B cell (primary cell): ENCODE measurements at regions of chr17 and their contacts with region 1.

Region 1: DNA sequence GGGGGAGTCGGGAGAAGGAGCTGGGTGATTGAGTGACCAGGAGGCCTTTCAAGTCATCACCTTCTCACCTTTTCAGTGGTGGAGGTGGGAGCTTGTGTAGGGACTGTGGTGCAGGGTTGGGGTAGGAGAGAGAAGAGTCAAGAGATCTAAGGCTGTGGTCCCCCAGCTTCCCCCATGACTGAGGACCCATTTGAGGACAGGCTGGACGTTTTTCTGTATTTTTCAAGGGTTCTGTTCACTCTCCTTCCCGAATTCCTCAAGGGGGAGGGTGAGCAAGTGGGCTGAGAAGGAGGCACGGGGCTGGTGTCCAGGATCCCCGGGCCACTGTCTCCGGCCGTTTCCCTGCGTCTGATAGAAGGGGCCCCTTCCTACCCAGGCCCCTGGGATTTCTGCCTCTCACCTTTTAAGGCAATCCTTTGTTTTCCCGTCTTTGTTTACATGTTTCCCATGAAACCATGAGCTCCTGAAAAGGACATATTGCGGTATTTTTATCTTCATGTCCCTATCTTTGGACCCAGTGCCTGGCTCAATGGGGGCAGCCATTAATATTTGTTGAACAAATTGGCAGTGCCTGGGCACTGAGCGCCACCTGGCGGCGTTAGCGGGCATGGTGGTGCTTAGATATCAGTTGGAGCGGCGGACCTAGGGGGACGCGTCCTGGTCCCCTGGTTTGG is 9.2 kb upstream of the CD300A start:
- DNase-seq: peak; percentile 82
- ATAC-seq: peak; percentile 53
- H3K4me3 ChIP-seq: no peak overlapping the region
- H3K4me3 Mint-ChIP-seq: peak overlapping the region; percentile 11
- H3K27ac ChIP-seq: no peak overlapping the region
- H3K27ac Mint-ChIP-seq: no peak overlapping the region
- H3K4me1 ChIP-seq: peaks cover 11 to 19% of the 10 kb centered on the region in 2 donors
- H3K4me1 Mint-ChIP-seq: peaks cover 7% of the 10 kb centered on the region
- H3K27me3 ChIP-seq: peaks cover 0 to 31% (median 9%) of the 10 kb centered on the region in 4 experiments
- H3K27me3 Mint-ChIP-seq: peaks cover 31% of the 10 kb centered on the region
- CTCF ChIP-seq: peak; percentile 97

Region 2: GRCh38 chr17:73255671-73256181 is 1201.6 kb before region 1 on chr17:
- CTCF ChIA-PET with region 1: no interaction called
- POLR2A ChIA-PET with region 1: no interaction called
- intact Hi-C with region 1: no loop called
- DNase-seq: peak; percentile 70
- ATAC-seq: peak; percentile 65
- H3K4me3 ChIP-seq: no peak overlapping the region
- H3K4me3 Mint-ChIP-seq: no peak overlapping the region
- H3K27ac ChIP-seq: no peak overlapping the region
- H3K27ac Mint-ChIP-seq: no peak overlapping the region
- H3K4me1 ChIP-seq: no peaks in the 10 kb centered on the region
- H3K4me1 Mint-ChIP-seq: peaks cover 1% of the 10 kb centered on the region
- H3K27me3 ChIP-seq: peaks cover 0 to 3% (median 0%) of the 10 kb centered on the region in 4 experiments
- H3K27me3 Mint-ChIP-seq: no peaks in the 10 kb centered on the region
- CTCF ChIP-seq: peak; percentile 99

Region 3: DNA sequence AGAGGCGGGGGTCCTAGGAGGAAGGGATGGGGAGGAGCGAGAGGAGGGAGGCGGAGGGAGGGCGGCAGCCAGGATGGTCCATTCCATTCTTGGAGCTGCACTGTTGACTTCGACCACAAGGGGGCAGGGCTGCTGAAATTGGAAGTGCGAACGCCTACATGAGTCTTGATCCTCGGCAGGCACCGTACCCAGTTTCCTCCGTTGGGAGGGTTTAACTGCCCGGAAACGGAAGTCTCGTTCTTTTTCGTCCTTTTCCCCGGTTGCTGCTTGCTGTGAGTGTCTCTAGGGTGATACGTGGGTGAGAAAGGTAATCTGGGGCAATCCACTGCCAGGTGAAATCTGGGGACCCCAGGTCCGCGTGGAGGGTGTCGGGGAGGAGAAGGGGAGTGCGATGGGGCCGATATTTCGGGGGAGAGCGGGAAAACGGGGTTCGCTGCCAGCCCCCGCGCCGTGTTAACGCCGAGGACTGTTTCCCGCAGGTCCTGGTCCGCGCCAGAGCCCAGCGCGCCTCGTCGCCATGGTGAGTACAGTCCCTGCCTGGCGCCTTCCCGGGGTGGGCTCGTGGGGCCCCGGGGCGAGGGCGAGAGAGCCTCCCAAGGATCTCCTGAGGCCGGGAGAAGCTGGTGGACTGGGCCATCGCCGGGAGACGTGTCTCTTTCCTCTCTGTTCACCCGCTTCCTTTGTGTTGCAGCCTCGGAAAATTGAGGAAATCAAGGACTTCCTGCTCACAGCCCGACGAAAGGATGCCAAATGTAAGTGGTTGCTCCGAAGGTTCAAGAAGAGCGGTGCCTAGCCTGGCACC is 253.6 kb before region 1 on chr17 and contains the start of gene RPL38:
- CTCF ChIA-PET with region 1: interaction called, 5 read pairs
- POLR2A ChIA-PET with region 1: no interaction called
- intact Hi-C with region 1: loop called (anchors 2 kb)
- DNase-seq: peak; percentile 96
- ATAC-seq: peak; percentile 98
- H3K4me3 ChIP-seq: peak within 1 kb of the TSS; percentile 90 to 94 (median 91)
- H3K4me3 Mint-ChIP-seq: peak within 1 kb of the TSS; percentile 98
- H3K27ac ChIP-seq: peak within 1 kb of the TSS; percentile 70 to 85
- H3K27ac Mint-ChIP-seq: peak within 1 kb of the TSS; percentile 94
- H3K4me1 ChIP-seq: peaks cover 34 to 40% of the 10 kb centered on the region in 2 donors
- H3K4me1 Mint-ChIP-seq: peaks cover 33% of the 10 kb centered on the region
- H3K27me3 ChIP-seq: peaks cover 0 to 40% (median 8%) of the 10 kb centered on the region in 4 experiments
- H3K27me3 Mint-ChIP-seq: peaks cover 29% of the 10 kb centered on the region
- CTCF ChIP-seq: peak; percentile 84
- total RNA-seq, gene RPL38: 1,416 and 1,550 TPM in 2 replicates

Region 4: GRCh38 chr17:74361230-74362068 is 95.8 kb before region 1 on chr17 and contains the start of gene BTBD17:
- CTCF ChIA-PET with region 1: interaction called, 65 read pairs
- POLR2A ChIA-PET with region 1: no interaction called
- intact Hi-C with region 1: no loop called
- DNase-seq: peak; percentile 30
- ATAC-seq: peak; percentile 45
- H3K4me3 ChIP-seq: no peak within 1 kb of the TSS
- H3K4me3 Mint-ChIP-seq: no peak within 1 kb of the TSS
- H3K27ac ChIP-seq: no peak within 1 kb of the TSS
- H3K27ac Mint-ChIP-seq: no peak within 1 kb of the TSS
- H3K4me1 ChIP-seq: peaks cover 0 to 7% of the 10 kb centered on the region in 2 donors
- H3K4me1 Mint-ChIP-seq: peaks cover 2% of the 10 kb centered on the region
- H3K27me3 ChIP-seq: peaks cover 0 to 36% (median 7%) of the 10 kb centered on the region in 4 experiments
- H3K27me3 Mint-ChIP-seq: peaks cover 36% of the 10 kb centered on the region
- CTCF ChIP-seq: peak; percentile 41
- total RNA-seq, gene BTBD17: not detected in 2 replicates

Region 5: GRCh38 chr17:74379495-74380085 is 77.7 kb before region 1 on chr17:
- CTCF ChIA-PET with region 1: interaction called, 95 read pairs
- POLR2A ChIA-PET with region 1: interaction called, 5 read pairs
- intact Hi-C with region 1: loop called (anchors 1 kb)
- DNase-seq: peak; percentile 83
- ATAC-seq: peak; percentile 73
- H3K4me3 ChIP-seq: no peak overlapping the region
- H3K4me3 Mint-ChIP-seq: no peak overlapping the region
- H3K27ac ChIP-seq: no peak overlapping the region
- H3K27ac Mint-ChIP-seq: no peak overlapping the region
- H3K4me1 ChIP-seq: peaks cover 5 to 9% of the 10 kb centered on the region in 2 donors
- H3K4me1 Mint-ChIP-seq: no peaks in the 10 kb centered on the region
- H3K27me3 ChIP-seq: peaks cover 0 to 15% (median 3%) of the 10 kb centered on the region in 4 experiments
- H3K27me3 Mint-ChIP-seq: peaks cover 19% of the 10 kb centered on the region
- CTCF ChIP-seq: peak; percentile 76

Region 6: DNA sequence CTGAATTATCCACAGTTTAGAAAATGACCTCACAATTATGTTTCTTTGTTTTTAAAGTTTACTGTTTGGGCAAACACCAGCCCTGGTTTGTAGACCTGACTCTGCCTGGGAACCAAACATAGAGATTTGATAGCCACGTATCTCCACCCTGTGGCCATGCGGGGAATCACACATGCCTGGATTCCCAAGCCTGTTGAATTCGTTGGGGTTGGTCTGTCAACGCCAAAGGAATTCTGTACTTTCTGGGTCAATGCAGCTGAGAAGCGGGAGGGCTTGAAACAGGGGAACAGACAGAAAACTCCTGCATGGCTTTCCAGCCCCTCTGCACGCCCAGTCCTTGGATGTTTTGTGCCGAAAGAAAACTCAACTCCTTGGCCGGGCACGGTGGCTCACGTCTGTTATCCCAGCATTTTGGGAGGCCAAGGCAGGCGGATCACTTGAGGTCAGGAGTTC is 36.1 kb after region 1 on chr17:
- CTCF ChIA-PET with region 1: interaction called, 9 read pairs
- POLR2A ChIA-PET with region 1: no interaction called
- intact Hi-C with region 1: loop called (anchors 1 kb)
- DNase-seq: peak; percentile 68
- ATAC-seq: peak; percentile 80
- H3K4me3 ChIP-seq: no peak overlapping the region
- H3K4me3 Mint-ChIP-seq: no peak overlapping the region
- H3K27ac ChIP-seq: no peak overlapping the region
- H3K27ac Mint-ChIP-seq: no peak overlapping the region
- H3K4me1 ChIP-seq: no peaks in the 10 kb centered on the region
- H3K4me1 Mint-ChIP-seq: no peaks in the 10 kb centered on the region
- H3K27me3 ChIP-seq: no peaks in the 10 kb centered on the region
- H3K27me3 Mint-ChIP-seq: peaks cover 10% of the 10 kb centered on the region
- CTCF ChIP-seq: peak; percentile 90

Region 7: GRCh38 chr17:74558882-74559519 is 101.7 kb after region 1 on chr17:
- CTCF ChIA-PET with region 1: no interaction called
- POLR2A ChIA-PET with region 1: no interaction called
- intact Hi-C with region 1: no loop called
- DNase-seq: no peak
- ATAC-seq: no peak
- H3K4me3 ChIP-seq: no peak overlapping the region
- H3K4me3 Mint-ChIP-seq: peak overlapping the region; percentile 4
- H3K27ac ChIP-seq: peak overlapping the region; percentile 47 to 79
- H3K27ac Mint-ChIP-seq: peak overlapping the region; percentile 66
- H3K4me1 ChIP-seq: peaks cover 36 to 54% of the 10 kb centered on the region in 2 donors
- H3K4me1 Mint-ChIP-seq: peaks cover 27% of the 10 kb centered on the region
- H3K27me3 ChIP-seq: no peaks in the 10 kb centered on the region
- H3K27me3 Mint-ChIP-seq: peaks cover 19% of the 10 kb centered on the region
- CTCF ChIP-seq: no peak

Region 8: DNA sequence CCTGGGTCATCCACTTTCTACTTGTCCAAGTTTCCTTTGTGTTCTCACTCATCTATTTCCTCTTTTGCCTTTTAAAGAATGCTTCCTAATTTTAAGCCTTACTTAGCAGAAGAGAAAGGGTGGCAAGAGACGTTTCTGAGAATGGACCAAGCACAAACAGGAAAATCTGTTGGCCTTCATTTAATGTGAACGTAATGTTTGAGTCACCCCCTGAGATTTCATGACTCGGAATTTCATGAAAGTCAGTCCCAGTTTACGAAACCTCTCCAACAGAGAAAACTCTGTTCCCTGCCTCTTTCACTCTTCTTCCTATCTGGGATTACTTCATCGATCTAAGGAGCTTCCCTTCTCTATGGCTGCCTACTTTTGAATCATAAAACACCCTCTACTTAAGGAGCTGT is 166.4 kb after region 1 on chr17 and contains the start of gene CD300E:
- CTCF ChIA-PET with region 1: no interaction called
- POLR2A ChIA-PET with region 1: no interaction called
- intact Hi-C with region 1: no loop called
- DNase-seq: no peak
- ATAC-seq: no peak
- H3K4me3 ChIP-seq: no peak within 1 kb of the TSS
- H3K4me3 Mint-ChIP-seq: no peak within 1 kb of the TSS
- H3K27ac ChIP-seq: no peak within 1 kb of the TSS
- H3K27ac Mint-ChIP-seq: no peak within 1 kb of the TSS
- H3K4me1 ChIP-seq: peaks cover 0 to 3% of the 10 kb centered on the region in 2 donors
- H3K4me1 Mint-ChIP-seq: peaks cover 5% of the 10 kb centered on the region
- H3K27me3 ChIP-seq: peaks cover 0 to 21% (median 9%) of the 10 kb centered on the region in 4 experiments
- H3K27me3 Mint-ChIP-seq: peaks cover 48% of the 10 kb centered on the region
- CTCF ChIP-seq: no peak
- total RNA-seq, gene CD300E: 0.10 TPM in 1 of 2 replicates, not detected in the other